Dorsolateral prefrontal cortex (tissue), 120 donors: ENCODE measurements at regions of chr10 and their contacts with region 1.

Region 1: GRCh38 chr10:78972947-78973900 is 95.5 kb upstream of the ZMIZ1 start:
- DNase-seq: peak; percentile 74 to 89 (median 84)
- H3K4me3 ChIP-seq: peak overlapping the region; percentile 24 to 71 (median 57)
- H3K27ac ChIP-seq: peak overlapping the region; percentile 85 to 99 (median 98)
- H3K27me3 ChIP-seq: no peaks in the 10 kb centered on the region
- CTCF ChIP-seq: peak in 1 of 56 donors; percentile 47

Region 2: GRCh38 chr10:78302989-78303854 is 670.0 kb before region 1 on chr10:
- intact Hi-C with region 1: loop called (anchors 2 kb)
- DNase-seq: peak; percentile 79 to 95 (median 90)
- H3K4me3 ChIP-seq: peak overlapping the region; percentile 36 to 78 (median 65)
- H3K27ac ChIP-seq: peak overlapping the region; percentile 70 to 99 (median 96)
- H3K27me3 ChIP-seq: no peaks in the 10 kb centered on the region
- CTCF ChIP-seq: peak; percentile 14 to 73 (median 57)

Region 3: DNA sequence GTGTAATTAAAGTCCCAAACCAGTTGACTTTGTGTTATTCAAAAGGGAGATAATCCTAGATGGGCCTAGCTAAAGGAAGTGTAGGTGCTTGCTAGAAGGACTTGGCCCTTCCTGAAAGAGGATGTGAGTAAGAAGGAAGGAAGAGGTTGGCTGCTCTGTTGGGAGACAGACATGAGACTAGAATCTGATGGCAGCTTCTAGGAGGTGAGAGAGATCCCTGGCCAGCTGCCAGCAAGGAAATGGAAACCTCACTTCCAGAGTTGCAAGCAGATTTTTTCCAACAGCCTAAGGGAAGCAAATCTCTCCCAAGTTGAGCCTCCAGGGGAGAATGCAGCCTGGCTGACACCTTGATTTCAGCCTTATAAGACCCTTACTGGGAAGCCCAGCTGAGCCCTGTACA is 272.8 kb before region 1 on chr10:
- intact Hi-C with region 1: no loop called
- DNase-seq: peak in 1 of 10 donors; percentile 24
- H3K4me3 ChIP-seq: no peak overlapping the region
- H3K27ac ChIP-seq: no peak overlapping the region
- H3K27me3 ChIP-seq: no peaks in the 10 kb centered on the region
- CTCF ChIP-seq: no peak

Region 4: DNA sequence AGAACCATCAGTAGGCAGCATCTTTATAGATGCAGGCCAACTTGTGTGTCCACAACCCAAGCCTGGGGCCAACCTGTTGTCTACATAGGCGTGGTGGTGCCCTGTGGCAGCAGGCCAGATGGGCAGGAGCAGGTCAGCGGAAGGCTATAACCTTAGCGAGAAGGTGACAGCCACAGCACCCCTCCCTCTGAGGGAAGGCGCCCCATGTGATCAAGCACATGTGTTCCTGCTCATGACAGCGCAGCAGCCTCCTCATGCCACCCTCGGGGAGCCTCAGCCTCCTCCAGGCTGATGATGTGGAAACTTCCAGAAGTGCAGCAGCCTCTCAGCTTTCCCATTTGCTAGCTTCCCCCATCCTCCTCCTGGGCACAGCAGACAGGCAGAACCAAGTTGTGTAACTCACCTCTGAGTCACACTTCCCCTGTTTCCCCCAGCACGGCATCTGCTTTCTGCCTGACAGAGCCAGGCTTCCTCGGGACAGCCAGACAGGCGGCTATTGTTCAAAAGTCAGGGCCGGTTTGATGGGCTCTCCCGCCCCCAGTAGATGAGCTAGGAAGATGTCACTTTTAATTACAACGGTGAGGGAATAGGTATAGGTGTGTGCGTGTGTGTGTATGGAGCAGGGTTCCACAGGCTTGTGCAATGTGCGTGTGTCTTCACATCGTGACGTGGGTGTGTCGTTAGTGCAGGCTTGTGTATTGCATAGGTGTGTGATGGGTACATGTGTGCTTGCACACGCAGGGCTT is 216.4 kb before region 1 on chr10:
- intact Hi-C with region 1: loop called in 1 of 2 experiments (anchors 5 kb)
- DNase-seq: peak in 9 of 10 donors; percentile 45 to 91 (median 74)
- H3K4me3 ChIP-seq: no peak overlapping the region
- H3K27ac ChIP-seq: peak overlapping the region in 44 of 59 donors; percentile 2 to 76 (median 56)
- H3K27me3 ChIP-seq: no peaks in the 10 kb centered on the region
- CTCF ChIP-seq: peak in 8 of 56 donors; percentile 6 to 39 (median 18)

Region 5: DNA sequence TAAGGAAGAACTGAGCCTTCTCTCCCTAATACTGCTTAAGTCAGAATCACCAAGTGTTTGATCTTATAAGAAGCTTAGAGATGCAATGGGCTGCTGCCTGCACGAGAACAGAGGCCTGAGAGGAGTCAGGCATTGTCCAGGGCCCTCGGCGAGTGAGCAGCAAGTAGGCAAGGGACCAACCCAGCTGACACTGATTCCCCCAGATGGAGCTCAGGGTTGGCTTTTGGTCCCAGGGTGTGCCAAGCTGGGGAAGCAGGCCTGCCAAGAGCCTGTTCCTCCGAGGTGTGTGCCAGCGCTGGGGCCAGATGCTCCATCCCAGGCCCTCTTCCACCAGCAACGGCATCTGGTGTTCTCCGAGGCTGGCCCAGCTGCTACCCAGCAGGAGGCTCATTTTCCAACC is 126.5 kb before region 1 on chr10:
- intact Hi-C with region 1: loop called in 1 of 2 experiments (anchors 5 kb)
- DNase-seq: peak; percentile 45 to 83 (median 67)
- H3K4me3 ChIP-seq: no peak overlapping the region
- H3K27ac ChIP-seq: peak overlapping the region in 39 of 59 donors; percentile 1 to 75 (median 47)
- H3K27me3 ChIP-seq: no peaks in the 10 kb centered on the region
- CTCF ChIP-seq: peak in 1 of 56 donors; percentile 14

Region 6: GRCh38 chr10:78925800-78926319 is 47.4 kb before region 1 on chr10:
- intact Hi-C with region 1: no loop called
- DNase-seq: no peak
- H3K4me3 ChIP-seq: no peak overlapping the region
- H3K27ac ChIP-seq: no peak overlapping the region
- H3K27me3 ChIP-seq: no peaks in the 10 kb centered on the region
- CTCF ChIP-seq: no peak

Region 7: GRCh38 chr10:79059859-79060379 is 86.7 kb after region 1 on chr10:
- intact Hi-C with region 1: loop called in 1 of 2 experiments (anchors 2 kb)
- DNase-seq: peak in 8 of 10 donors; percentile 66 to 81 (median 74)
- H3K4me3 ChIP-seq: peak overlapping the region in 8 of 59 donors; percentile 1 to 14 (median 6)
- H3K27ac ChIP-seq: peak overlapping the region in 55 of 59 donors; percentile 4 to 89 (median 76)
- H3K27me3 ChIP-seq: no peaks in the 10 kb centered on the region
- CTCF ChIP-seq: peak in 6 of 56 donors; percentile 11 to 19 (median 14)

Region 8: GRCh38 chr10:79195091-79195923 is 222.1 kb after region 1 on chr10:
- intact Hi-C with region 1: loop called (anchors 2 to 5 kb)
- DNase-seq: peak; percentile 75 to 91 (median 86)
- H3K4me3 ChIP-seq: peak overlapping the region in 35 of 59 donors; percentile 4 to 53 (median 34)
- H3K27ac ChIP-seq: peak overlapping the region in 43 of 59 donors; percentile 2 to 81 (median 54)
- H3K27me3 ChIP-seq: no peaks in the 10 kb centered on the region
- CTCF ChIP-seq: peak; percentile 92 to 100 (median 98)